Sigmoid colon (tissue), 7 donors: ENCODE measurements at regions of chr4 and their contacts with region 1.

Region 1: DNA sequence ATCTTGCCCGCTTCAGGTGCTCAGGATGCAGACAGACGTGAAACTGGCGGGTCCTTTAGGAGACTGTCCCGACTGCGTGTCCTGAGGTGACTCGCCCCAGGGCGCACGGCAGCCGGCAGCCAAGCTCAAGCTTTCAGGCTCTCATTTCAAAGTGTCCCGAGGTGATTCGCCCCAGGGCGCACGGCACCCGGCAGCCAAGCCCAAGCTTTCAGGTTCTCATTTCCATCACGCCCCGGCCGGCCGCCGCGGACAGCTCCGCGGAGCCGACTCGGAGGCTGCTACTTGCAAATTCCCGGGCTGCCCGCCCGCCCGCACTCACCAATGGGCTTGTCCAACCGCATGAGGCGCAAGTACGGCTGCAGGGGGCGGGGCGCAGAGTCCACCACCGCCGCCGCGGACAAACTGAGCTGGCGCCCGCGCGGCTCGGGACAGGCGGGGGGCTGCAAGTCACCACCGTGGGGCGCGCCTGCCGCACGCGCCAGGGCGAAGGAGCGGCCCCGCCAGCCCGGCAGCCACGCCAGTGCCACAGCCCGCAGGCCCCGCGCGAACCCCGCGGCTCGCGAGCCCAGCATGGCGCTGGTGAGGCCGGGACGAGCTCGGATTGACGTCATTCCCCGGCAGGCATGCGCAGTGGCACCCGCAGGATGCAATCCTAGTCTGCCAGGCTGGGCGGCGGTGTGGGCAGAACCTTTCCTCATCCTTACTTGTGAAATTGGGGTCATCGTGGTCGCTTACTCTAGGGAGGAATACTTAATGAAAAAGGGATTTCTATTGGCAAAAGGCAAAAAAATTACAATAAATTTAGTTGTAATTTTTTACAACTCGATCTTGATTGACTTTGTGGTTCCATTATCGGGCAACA is at the start of gene COQ2:
- DNase-seq: peak; percentile 98
- H3K4me3 ChIP-seq: peak within 1 kb of the TSS; percentile 36 to 70 (median 68)
- H3K27ac ChIP-seq: peak within 1 kb of the TSS; percentile 90 to 93 (median 92)
- H3K4me1 ChIP-seq: peaks cover 0 to 16% (median 12%) of the 10 kb centered on the region in 4 donors
- H3K27me3 ChIP-seq: no peaks in the 10 kb centered on the region
- CTCF ChIP-seq: peak in 2 of 4 experiments; percentile 11 to 34
- EP300 ChIP-seq: no peak
- POLR2A ChIP-seq: peak; percentile 50 to 75
- total RNA-seq, gene COQ2: 5.6 to 7.8 (median 7.2) TPM

Region 2: DNA sequence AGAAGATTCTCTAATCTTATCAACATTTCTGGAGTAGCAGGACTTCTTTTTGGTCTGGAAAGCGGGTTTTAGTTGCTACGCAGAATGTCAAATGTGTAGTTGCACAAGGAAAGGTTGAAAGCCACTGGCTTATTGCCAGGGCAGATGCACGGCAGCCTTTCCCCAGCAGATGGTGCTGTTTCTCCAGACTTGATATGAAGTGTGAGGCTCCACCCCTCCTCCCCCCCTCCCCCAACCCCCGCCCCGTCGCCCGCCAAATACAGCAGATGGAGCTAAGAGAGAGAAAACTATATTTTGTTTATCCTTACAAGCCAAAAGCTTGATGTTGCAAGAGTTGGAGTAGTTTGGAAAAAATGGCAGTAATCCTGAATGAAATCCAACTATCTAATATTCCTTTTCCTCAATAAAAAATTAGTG is 822.0 kb before region 1 on chr4:
- intact Hi-C with region 1: loop called (anchors 5 kb)
- DNase-seq: peak; percentile 95
- H3K4me3 ChIP-seq: no peak overlapping the region
- H3K27ac ChIP-seq: peak overlapping the region in 1 of 4 donors; percentile 26
- H3K4me1 ChIP-seq: peaks cover 0 to 11% (median 3%) of the 10 kb centered on the region in 4 donors
- H3K27me3 ChIP-seq: no peaks in the 10 kb centered on the region
- CTCF ChIP-seq: peak in 3 of 4 experiments; percentile 41 to 89 (median 43)
- EP300 ChIP-seq: no peak
- POLR2A ChIP-seq: no peak

Region 3: DNA sequence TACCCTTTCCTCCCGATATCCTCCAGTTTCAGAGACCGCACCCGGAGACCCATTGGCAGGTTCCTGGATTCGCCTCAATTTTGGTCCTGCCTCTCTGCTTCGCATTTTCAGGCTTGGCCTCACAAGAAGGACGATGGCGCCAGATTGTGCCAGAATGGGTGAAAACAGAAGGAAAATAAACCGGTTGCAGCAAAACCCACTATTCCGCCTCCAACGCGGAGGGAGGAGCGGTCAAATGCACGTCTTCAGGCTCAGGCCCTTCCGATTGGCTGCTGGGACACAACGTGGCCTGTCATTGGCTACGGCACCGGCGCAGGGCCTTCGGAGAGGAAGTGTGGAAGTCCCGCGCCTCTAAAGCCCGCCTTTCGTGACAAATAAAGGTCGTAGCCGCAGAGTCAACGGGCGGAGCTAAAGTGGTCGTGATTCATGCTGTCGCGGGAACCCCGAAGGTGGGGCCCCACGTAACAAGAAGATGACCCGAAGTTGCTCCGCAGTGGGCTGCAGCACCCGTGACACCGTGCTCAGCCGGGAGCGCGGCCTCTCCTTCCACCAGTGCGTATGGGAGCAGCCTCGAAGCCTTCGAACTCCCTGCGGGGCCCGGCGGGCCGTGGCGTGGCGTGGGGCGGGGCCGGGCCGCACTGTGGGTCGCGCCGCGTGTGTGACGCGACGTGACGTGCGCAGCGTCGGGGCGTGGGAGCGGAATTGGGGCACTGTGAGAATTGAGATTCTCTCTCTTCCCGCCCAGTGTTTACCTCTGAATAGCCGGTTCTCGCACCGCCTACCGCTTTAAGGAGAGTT is 383.9 kb before region 1 on chr4 and contains the start of gene THAP9:
- intact Hi-C with region 1: loop called (anchors 10 kb)
- DNase-seq: peak; percentile 100
- H3K4me3 ChIP-seq: peak within 1 kb of the TSS; percentile 54 to 82 (median 74)
- H3K27ac ChIP-seq: peak within 1 kb of the TSS; percentile 94 to 98 (median 98)
- H3K4me1 ChIP-seq: peaks cover 0 to 37% (median 34%) of the 10 kb centered on the region in 4 donors
- H3K27me3 ChIP-seq: no peaks in the 10 kb centered on the region
- CTCF ChIP-seq: no peak
- EP300 ChIP-seq: peak in 2 of 4 donors; percentile 5 to 13
- POLR2A ChIP-seq: peak; percentile 86 to 88
- total RNA-seq, gene THAP9: 3.9 to 7.5 (median 5.3) TPM

Region 4: DNA sequence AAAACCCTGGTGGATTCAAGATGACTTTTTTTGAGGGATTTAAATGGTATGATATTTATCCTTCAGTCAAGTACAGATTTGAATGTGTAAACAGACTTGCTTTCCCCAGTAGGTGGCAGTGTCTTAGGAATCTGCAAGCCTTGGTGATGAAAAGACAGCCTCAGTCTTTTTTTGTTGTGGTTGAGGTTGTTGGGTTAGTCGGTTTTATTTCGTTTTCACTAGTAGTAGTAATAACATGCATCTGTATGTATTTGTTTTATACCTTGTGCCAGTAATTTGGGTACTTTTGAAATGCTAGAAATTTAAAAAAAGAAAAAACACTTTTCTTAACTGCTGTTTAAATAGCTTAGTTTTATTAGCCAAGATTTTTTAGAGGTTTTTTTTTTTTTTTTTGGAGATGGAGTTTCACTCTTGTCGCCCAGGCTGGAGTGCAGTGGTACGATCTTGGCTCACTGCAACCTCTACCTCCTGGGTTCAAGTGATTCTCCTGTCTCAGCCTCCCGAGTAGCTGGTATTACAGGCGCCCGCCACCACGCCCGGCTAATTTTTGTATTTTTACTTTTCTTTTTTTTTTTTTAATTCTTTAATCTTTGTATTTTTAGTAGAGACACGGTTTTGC is 210.2 kb before region 1 on chr4:
- intact Hi-C with region 1: loop called (anchors 5 kb)
- DNase-seq: no peak
- H3K4me3 ChIP-seq: no peak overlapping the region
- H3K27ac ChIP-seq: peak overlapping the region in 3 of 4 donors; percentile 58 to 79 (median 66)
- H3K4me1 ChIP-seq: peaks cover 0 to 30% (median 25%) of the 10 kb centered on the region in 4 donors
- H3K27me3 ChIP-seq: no peaks in the 10 kb centered on the region
- CTCF ChIP-seq: peak in 3 of 4 experiments; percentile 46 to 58 (median 52)
- EP300 ChIP-seq: no peak
- POLR2A ChIP-seq: no peak